Transverse colon (tissue), 4 donors: ENCODE measurements at regions of chr1 and their contacts with region 1.

Region 1: GRCh38 chr1:80211691-80212380 is 1205.3 kb upstream of the ADGRL4 start:
- DNase-seq: no peak
- H3K4me3 ChIP-seq: no peak overlapping the region
- H3K27ac ChIP-seq: no peak overlapping the region
- H3K4me1 ChIP-seq: no peaks in the 10 kb centered on the region
- H3K27me3 ChIP-seq: no peaks in the 10 kb centered on the region
- CTCF ChIP-seq: no peak
- EP300 ChIP-seq: no peak
- POLR2A ChIP-seq: no peak

Region 2: DNA sequence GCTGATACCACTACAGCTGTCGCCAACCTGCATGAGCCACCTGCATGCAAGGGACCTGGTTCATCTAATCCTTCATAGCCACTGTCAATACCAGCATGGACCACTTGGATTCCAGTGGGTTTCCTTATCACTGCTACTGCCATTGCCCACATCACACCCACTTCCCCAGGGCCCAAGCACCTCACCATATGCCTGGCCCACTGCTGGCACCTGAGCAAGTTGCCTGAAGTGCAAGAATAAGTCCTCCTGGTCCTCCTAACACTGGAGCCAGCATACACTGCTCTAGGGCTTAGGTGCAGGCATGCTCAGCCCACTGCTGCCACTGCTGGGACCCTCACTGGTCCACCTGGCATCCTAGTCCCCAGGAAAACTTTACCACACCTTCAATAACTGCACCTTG is 68.5 kb before region 1 on chr1:
- in situ Hi-C with region 1: no loop called
- intact Hi-C with region 1: no loop called
- DNase-seq: no peak
- H3K4me3 ChIP-seq: no peak overlapping the region
- H3K27ac ChIP-seq: no peak overlapping the region
- H3K4me1 ChIP-seq: no peaks in the 10 kb centered on the region
- H3K27me3 ChIP-seq: no peaks in the 10 kb centered on the region
- CTCF ChIP-seq: no peak
- EP300 ChIP-seq: no peak
- POLR2A ChIP-seq: no peak

Region 3: GRCh38 chr1:80181418-80181817 is 30.4 kb before region 1 on chr1:
- in situ Hi-C with region 1: no loop called
- intact Hi-C with region 1: loop called (anchors 1 kb)
- DNase-seq: no peak
- H3K4me3 ChIP-seq: no peak overlapping the region
- H3K27ac ChIP-seq: no peak overlapping the region
- H3K4me1 ChIP-seq: no peaks in the 10 kb centered on the region
- H3K27me3 ChIP-seq: no peaks in the 10 kb centered on the region
- CTCF ChIP-seq: no peak
- EP300 ChIP-seq: no peak
- POLR2A ChIP-seq: no peak